Cardiac septum (tissue), 1 donor: ENCODE measurements at regions of chr3 and their contacts with region 1.

Region 1: DNA sequence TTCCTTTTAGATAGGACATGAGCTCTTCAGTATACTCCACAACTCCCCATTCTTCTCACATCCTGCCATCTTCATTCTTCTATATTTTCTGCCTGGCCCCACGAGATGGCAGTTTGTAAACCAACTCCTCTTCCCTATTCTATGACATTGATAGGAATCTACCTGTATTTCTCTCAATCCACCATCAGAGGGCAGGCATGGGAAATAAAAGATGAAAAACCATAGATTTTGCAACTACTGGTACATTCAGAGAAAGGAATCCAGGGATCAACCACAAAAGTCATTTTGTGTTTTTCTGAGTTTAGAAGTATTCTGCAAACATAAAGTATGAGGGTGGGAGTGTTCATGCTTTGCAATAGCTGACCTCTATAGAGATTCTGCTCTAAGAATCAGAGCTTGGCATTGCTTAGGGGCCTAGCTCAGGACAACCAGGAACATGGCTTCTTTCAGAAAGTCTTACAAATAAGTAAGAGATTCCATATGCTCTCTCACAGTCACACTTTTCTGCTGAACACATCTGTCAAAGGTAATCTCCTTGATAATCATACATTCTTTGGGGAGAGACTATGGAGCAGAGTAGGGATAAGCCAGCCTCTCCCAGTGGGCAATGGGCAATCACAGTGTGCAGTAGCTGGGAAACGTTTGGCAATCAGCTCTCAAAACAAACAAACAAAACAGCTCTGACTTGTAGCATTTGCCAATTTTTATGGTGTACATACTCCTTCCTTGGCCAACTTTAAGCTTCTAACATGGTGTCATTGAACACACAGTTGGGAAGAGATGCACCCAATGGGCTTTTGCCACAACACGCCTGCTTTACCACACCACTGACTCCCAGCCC is 43.1 kb upstream of the SLC25A36 start:
- DNase-seq: no peak

Region 2: GRCh38 chr3:139710212-139710611 is 1188.3 kb before region 1 on chr3:
- intact Hi-C with region 1: no loop called
- DNase-seq: no peak

Region 3: DNA sequence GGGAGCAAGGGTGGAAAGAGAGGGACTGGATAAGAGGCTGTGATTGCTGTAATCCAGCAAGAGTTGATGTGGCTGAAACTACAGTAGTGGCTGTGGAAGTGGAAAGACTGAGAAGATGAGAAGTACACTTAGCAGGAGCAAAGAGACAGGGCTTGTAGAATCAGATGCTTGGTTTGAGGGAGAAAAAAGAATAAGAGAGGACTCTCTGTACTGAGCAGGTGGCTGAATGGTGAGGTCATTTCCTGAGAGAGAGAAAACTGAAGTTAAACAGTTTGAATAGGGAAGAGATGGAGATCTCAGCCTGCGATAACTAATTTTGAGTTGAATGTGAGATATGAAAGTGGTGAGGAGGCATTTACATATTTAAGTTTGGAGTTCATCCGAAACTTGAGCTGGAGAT is 52.7 kb before region 1 on chr3:
- intact Hi-C with region 1: no loop called
- DNase-seq: no peak

Region 4: DNA sequence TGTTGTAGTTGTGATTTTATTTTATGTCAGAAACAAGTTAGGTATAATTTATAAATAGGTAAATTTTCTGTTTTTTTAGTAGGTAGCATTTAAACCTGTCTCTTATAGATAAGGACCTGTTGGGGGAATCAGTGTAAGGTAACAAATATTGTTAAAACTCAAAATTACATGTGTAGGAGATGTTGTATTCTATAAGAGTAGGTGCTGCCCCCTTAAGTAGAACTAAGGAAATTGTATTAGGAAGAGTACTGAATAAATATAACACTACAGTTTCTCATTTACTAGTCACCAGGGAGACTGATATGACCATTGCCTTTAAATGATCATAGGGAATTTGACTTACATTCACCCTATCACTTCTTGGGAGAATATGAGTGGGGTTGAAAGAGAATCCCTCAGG is 74.3 kb after region 1 on chr3:
- intact Hi-C with region 1: loop called (anchors 2 kb)
- DNase-seq: no peak